Naive thymus-derived CD4-positive, alpha-beta T cell (primary cell): ENCODE measurements at regions of chr14 and their contacts with region 1.

Region 1: GRCh38 chr14:81205639-81206038 is 15.1 kb downstream of the GTF2A1 start:
- DNase-seq: no peak
- ATAC-seq: no peak
- H3K4me3 ChIP-seq: no peak overlapping the region
- H3K4me3 Mint-ChIP-seq: no peak overlapping the region
- H3K27ac ChIP-seq: no peak overlapping the region
- H3K27ac Mint-ChIP-seq: peak overlapping the region in 2 of 9 donors; percentile 12 to 78
- H3K4me1 ChIP-seq: peaks cover 0 to 4% of the 10 kb centered on the region in 2 donors
- H3K4me1 Mint-ChIP-seq: peaks cover 28 to 60% (median 36%) of the 10 kb centered on the region in 7 donors
- H3K27me3 ChIP-seq: no peaks in the 10 kb centered on the region
- H3K27me3 Mint-ChIP-seq: no peaks in the 10 kb centered on the region

Region 2: DNA sequence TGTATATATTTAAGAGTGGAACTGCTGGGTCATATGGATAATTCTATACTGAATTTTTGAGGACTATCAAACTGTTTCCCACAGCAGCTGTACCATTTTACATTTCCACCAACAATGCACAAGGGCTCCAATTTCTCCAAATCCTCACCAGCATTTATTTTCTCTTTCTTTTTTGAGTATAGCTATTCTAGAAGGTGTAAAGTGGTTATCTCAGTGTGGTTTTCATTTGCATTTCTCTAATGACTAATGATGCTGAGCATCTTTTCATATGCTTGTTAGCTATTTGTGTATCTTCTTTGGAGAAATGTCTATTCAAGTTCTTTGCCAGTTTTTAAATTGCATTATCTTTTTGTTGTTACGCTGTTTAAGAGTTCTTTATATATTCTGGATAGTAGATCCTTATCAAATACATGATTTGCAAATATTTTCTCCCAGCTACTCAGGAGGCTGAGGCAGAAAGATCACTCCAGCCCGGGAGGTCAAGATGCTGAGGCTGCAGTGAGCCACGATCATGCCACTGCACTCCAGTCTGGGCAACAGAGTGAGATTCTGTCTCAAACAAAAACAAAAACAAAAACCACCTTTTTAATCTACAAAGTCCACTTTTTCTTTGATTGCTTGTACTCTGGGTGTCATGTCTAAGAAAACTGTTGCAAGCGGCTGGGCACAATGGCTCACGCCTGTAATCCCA is 17.7 kb before region 1 on chr14:
- CTCF ChIA-PET with region 1: no interaction called
- POLR2A ChIA-PET with region 1: interaction called, 9 read pairs
- intact Hi-C with region 1: loop called in 1 of 2 experiments (anchors 2 kb)
- DNase-seq: no peak
- ATAC-seq: no peak
- H3K4me3 ChIP-seq: no peak overlapping the region
- H3K4me3 Mint-ChIP-seq: peak overlapping the region in 1 of 10 donors; percentile 29
- H3K27ac ChIP-seq: no peak overlapping the region
- H3K27ac Mint-ChIP-seq: peak overlapping the region in 5 of 9 donors; percentile 17 to 66 (median 57)
- H3K4me1 ChIP-seq: peaks cover 8 to 14% of the 10 kb centered on the region in 2 donors
- H3K4me1 Mint-ChIP-seq: peaks cover 23 to 57% (median 41%) of the 10 kb centered on the region in 7 donors
- H3K27me3 ChIP-seq: no peaks in the 10 kb centered on the region
- H3K27me3 Mint-ChIP-seq: no peaks in the 10 kb centered on the region